ENCODE measurements at regions of chr10 and their contacts with region 1.

Region 1: GRCh38 chr10:79347226-79347893 is at the start of gene PPIF:
- DNase-seq: peak; percentile 95
- ATAC-seq: peak; percentile 96
- H3K4me3 Mint-ChIP-seq: peak within 1 kb of the TSS; percentile 86
- H3K27ac Mint-ChIP-seq: peak within 1 kb of the TSS; percentile 94
- H3K4me1 Mint-ChIP-seq: peaks cover 26% of the 10 kb centered on the region
- H3K27me3 Mint-ChIP-seq: no peaks in the 10 kb centered on the region
- CTCF ChIP-seq: peak; percentile 98
- total RNA-seq, gene PPIF: 81.5 to 88.6 TPM

Region 2: DNA sequence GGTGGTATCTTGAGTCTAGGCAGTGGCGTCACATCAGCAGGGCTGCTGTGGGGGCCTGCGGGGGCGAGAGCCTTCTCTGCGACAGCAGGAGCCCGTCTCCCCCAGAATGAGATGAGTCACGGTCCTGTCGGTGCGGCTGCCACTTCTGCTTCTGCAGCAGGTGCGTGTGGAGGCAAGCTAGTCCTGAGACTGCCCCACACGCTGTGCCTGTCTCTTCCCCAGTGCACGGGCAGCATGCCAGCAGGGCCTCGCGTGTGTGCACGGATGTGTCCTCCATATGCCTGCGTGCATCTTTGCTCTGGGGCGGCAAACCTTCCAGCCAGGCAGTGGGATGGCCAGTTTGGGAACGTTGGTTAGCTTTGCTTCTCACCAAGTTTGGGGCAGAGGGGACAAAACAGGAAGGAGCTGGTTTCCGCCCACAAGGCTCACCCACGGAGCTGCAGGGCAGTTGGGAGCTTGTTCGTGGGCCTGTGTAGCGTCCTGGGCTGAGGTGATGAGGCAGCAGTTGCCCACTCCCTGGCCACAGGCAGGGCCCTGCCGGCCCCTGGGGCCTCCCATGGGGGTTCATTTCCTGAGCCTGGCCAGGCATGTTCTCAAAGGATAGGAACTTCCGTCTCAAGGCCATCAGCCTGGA is 60.9 kb before region 1 on chr10:
- CTCF ChIA-PET with region 1: interaction called, 5 read pairs
- POLR2A ChIA-PET with region 1: interaction called, 11 read pairs
- intact Hi-C with region 1: loop called (anchors 5 kb)
- DNase-seq: peak; percentile 96
- ATAC-seq: peak; percentile 91
- H3K4me3 Mint-ChIP-seq: peak overlapping the region; percentile 61
- H3K27ac Mint-ChIP-seq: peak overlapping the region; percentile 88
- H3K4me1 Mint-ChIP-seq: peaks cover 46% of the 10 kb centered on the region
- H3K27me3 Mint-ChIP-seq: no peaks in the 10 kb centered on the region
- CTCF ChIP-seq: no peak

Region 3: GRCh38 chr10:79316671-79317431 is 30.5 kb before region 1 on chr10:
- CTCF ChIA-PET with region 1: interaction called, 27 read pairs
- POLR2A ChIA-PET with region 1: interaction called, 155 read pairs
- intact Hi-C with region 1: loop called (anchors 5 kb)
- DNase-seq: peak; percentile 63
- ATAC-seq: peak; percentile 62
- H3K4me3 Mint-ChIP-seq: peak overlapping the region; percentile 55
- H3K27ac Mint-ChIP-seq: peak overlapping the region; percentile 83
- H3K4me1 Mint-ChIP-seq: peaks cover 62% of the 10 kb centered on the region
- H3K27me3 Mint-ChIP-seq: no peaks in the 10 kb centered on the region
- CTCF ChIP-seq: no peak

Region 4: DNA sequence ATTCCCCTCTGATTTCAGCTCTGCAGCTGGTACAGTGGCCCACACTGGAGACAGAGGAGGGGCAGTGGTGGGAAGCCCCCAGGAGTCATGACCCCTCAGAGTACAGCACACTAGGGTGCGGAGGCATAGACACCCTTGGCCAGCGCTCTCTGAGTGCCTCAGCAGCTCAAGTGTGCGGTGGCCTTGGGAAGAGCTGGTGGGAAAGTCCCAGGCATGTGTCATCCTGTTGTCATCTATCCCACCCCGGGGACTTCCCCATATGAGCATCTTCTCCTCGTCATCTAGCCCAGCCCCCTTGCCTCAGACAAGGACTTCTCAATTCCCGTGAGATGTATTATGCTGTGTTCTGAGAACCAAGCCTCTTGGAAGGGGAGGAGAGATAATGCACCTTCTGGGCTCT is 15.7 kb before region 1 on chr10:
- CTCF ChIA-PET with region 1: interaction called, 25 read pairs
- POLR2A ChIA-PET with region 1: interaction called, 37 read pairs
- intact Hi-C with region 1: no loop called
- DNase-seq: peak; percentile 94
- ATAC-seq: peak; percentile 97
- H3K4me3 Mint-ChIP-seq: no peak overlapping the region
- H3K27ac Mint-ChIP-seq: peak overlapping the region; percentile 83
- H3K4me1 Mint-ChIP-seq: peaks cover 38% of the 10 kb centered on the region
- H3K27me3 Mint-ChIP-seq: no peaks in the 10 kb centered on the region
- CTCF ChIP-seq: no peak

Measured in activated CD8-positive, alpha-beta T cell treated with anti-CD3 and anti-CD28 coated beads for 36 hours (primary cell).